CD8-positive, alpha-beta T cell (primary cell): ENCODE measurements at regions of chr12 and their contacts with region 1.

Region 1: GRCh38 chr12:50637870-50638481 is 125.9 kb upstream of the ATF1 start:
- DNase-seq: peak in 2 of 9 experiments; percentile 46 to 65
- ATAC-seq: peak; percentile 62
- H3K4me3 ChIP-seq: no peak overlapping the region
- H3K4me3 Mint-ChIP-seq: no peak overlapping the region
- H3K27ac ChIP-seq: no peak overlapping the region
- H3K27ac Mint-ChIP-seq: peak overlapping the region; percentile 82
- H3K4me1 ChIP-seq: peaks cover 5% of the 10 kb centered on the region
- H3K4me1 Mint-ChIP-seq: peaks cover 26% of the 10 kb centered on the region
- H3K27me3 ChIP-seq: no peaks in the 10 kb centered on the region
- H3K27me3 Mint-ChIP-seq: no peaks in the 10 kb centered on the region
- CTCF ChIP-seq: peak; percentile 80

Region 2: DNA sequence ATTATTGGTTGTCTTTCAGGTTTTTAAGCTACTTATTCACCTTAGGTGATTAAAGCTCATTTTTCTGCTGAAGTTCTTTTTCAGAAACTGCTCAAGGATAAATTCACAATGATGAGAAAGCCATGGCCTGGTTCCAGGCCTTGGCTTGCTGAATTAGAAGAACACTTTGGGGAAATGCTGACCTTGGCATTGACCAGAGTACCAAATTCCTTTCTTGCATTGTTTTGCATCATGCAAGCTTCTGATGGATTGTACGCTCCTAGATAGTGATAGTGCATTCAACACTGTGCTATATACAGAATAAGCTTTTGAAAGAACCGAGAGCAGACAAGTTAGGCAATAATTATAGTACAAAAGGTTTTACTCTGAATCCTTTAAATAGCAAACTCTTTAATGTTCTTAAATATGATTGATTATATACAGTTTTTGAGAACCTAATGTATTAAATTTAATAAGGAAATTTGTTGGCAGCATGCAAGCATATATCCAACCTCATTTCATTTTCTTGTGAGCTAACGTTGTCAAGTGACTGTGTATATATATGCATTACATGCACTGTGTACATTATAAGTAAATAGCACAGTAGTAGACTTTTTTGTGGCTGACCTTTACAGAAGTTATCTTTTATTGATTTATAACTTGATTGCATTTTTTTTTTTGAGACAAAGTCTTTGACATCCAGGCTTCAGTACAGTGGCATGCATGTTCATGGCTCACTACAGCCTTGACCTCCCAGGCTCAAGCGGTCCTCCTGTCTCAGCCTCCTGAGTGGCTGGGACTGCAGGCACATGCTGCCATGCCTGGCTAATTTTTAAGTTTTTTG is 33.9 kb before region 1 on chr12:
- CTCF ChIA-PET with region 1: interaction called, 4 read pairs
- POLR2A ChIA-PET with region 1: no interaction called
- intact Hi-C with region 1: loop called in 1 of 2 experiments (anchors 5 kb)
- DNase-seq: no peak
- ATAC-seq: no peak
- H3K4me3 ChIP-seq: no peak overlapping the region
- H3K4me3 Mint-ChIP-seq: no peak overlapping the region
- H3K27ac ChIP-seq: no peak overlapping the region
- H3K27ac Mint-ChIP-seq: no peak overlapping the region
- H3K4me1 ChIP-seq: no peaks in the 10 kb centered on the region
- H3K4me1 Mint-ChIP-seq: peaks cover 28% of the 10 kb centered on the region
- H3K27me3 ChIP-seq: no peaks in the 10 kb centered on the region
- H3K27me3 Mint-ChIP-seq: no peaks in the 10 kb centered on the region
- CTCF ChIP-seq: no peak